PC-9 (cell line): ENCODE measurements at regions of chr7 and their contacts with region 1.

Region 1: GRCh38 chr7:831596-832166 is 595 bp upstream of the SUN1 start:
- DNase-seq: peak; percentile 58 to 93
- H3K4me3 ChIP-seq: peak overlapping the region; percentile 46; the same call in 1 of the 2 replicates
- H3K27ac ChIP-seq: peak overlapping the region; percentile 97
- H3K4me1 ChIP-seq: peaks cover 57% of the 10 kb centered on the region
- H3K27me3 ChIP-seq: no peaks in the 10 kb centered on the region
- CTCF ChIP-seq: no peak

Region 2: GRCh38 chr7:537911-538634 is 293.6 kb before region 1 on chr7:
- CTCF ChIA-PET with region 1: no interaction called
- POLR2A ChIA-PET with region 1: no interaction called
- intact Hi-C with region 1: loop called (anchors 5 kb)
- DNase-seq: peak; percentile 89 to 98
- H3K4me3 ChIP-seq: peak overlapping the region; percentile 60
- H3K27ac ChIP-seq: peak overlapping the region; percentile 99
- H3K4me1 ChIP-seq: peaks cover 52% of the 10 kb centered on the region
- H3K27me3 ChIP-seq: no peaks in the 10 kb centered on the region
- CTCF ChIP-seq: no peak

Region 3: GRCh38 chr7:786472-787255 is 45.0 kb before region 1 on chr7:
- CTCF ChIA-PET with region 1: no interaction called
- POLR2A ChIA-PET with region 1: no interaction called
- intact Hi-C with region 1: loop called (anchors 1 kb)
- DNase-seq: peak; percentile 54 to 81
- H3K4me3 ChIP-seq: no peak overlapping the region
- H3K27ac ChIP-seq: no peak overlapping the region
- H3K4me1 ChIP-seq: no peaks in the 10 kb centered on the region
- H3K27me3 ChIP-seq: no peaks in the 10 kb centered on the region
- CTCF ChIP-seq: peak; percentile 98

Region 4: DNA sequence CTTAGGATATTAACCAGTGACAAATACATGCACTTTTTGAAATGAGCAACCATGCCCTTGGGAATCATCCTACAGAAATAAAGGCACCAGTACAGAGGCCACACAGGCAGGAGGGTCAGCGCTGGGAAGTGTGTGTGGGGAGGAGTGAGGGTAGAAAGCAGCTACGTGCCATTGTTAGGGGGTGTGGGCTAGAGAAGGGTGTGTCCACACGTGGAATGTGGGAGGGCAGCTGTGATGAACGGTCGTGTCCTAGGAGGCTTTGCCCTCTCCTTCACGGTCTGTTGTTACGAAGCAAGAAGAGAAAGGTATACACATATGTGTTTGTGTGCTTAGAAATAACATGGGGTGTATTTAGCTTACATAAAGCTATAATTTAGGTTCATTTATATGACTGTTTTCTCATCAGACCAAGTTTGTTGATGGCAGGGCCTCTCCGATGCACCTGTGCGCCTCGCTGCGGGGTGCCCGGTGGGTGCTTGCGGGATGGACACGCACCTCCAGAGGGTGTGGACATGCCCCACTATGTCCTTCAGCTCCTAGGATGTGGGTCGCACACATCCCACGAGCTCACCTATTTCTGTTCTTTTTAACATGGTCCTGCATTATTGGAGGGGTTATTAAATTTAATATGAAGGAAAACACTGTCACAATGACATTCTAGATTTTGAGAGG is 27.8 kb after region 1 on chr7:
- CTCF ChIA-PET with region 1: no interaction called
- POLR2A ChIA-PET with region 1: no interaction called
- intact Hi-C with region 1: no loop called
- DNase-seq: no peak
- H3K4me3 ChIP-seq: no peak overlapping the region
- H3K27ac ChIP-seq: no peak overlapping the region
- H3K4me1 ChIP-seq: no peaks in the 10 kb centered on the region
- H3K27me3 ChIP-seq: no peaks in the 10 kb centered on the region
- CTCF ChIP-seq: no peak

Region 5: GRCh38 chr7:913736-914516 is 82.2 kb after region 1 on chr7:
- CTCF ChIA-PET with region 1: no interaction called
- POLR2A ChIA-PET with region 1: interaction called, 11 read pairs
- intact Hi-C with region 1: no loop called
- DNase-seq: peak; percentile 65 to 98
- H3K4me3 ChIP-seq: no peak overlapping the region
- H3K27ac ChIP-seq: no peak overlapping the region
- H3K4me1 ChIP-seq: peaks cover 12% of the 10 kb centered on the region
- H3K27me3 ChIP-seq: no peaks in the 10 kb centered on the region
- CTCF ChIP-seq: no peak; the same call in 1 of the 2 replicates

Region 6: DNA sequence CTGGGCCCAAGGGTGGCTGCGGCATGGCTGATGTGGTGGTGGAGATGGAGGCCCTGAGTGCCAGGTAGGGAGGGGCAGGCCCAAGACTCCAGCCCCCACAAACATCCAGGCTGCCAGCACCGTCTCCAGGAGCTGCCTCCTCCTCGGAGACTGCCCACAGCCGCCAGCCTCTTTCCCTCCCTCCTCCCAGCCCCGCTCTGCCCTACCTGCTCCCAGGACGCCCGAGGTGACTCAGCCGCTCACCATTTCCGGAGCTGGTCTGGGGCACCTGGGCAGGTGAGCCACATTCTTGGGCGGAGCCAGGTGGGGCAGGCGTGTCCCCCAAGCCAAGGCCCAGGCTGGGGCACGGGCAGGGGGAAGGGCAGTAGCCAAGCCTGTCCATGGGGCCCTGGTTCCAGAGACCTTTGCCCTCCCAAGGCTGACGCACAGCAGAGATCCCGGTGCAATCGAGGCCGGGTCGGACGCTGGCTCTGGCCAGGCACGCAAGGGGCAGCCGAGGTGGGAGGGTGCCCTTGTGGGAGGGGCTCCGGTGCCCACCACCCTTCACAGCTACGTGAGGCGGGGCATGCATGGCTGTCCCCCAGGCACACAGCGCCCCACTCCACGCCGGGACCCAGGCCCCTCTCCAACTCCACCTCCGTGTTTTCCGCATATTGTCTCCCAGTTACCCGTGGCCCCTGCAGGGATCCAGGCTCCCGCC is 114.0 kb after region 1 on chr7:
- CTCF ChIA-PET with region 1: no interaction called
- POLR2A ChIA-PET with region 1: interaction called, 3 read pairs
- intact Hi-C with region 1: loop called (anchors 1 kb)
- DNase-seq: peak; percentile 99 to 100
- H3K4me3 ChIP-seq: peak overlapping the region; percentile 48; the same call in 1 of the 2 replicates
- H3K27ac ChIP-seq: peak overlapping the region; percentile 94
- H3K4me1 ChIP-seq: peaks cover 61% of the 10 kb centered on the region
- H3K27me3 ChIP-seq: no peaks in the 10 kb centered on the region
- CTCF ChIP-seq: no peak

Region 7: DNA sequence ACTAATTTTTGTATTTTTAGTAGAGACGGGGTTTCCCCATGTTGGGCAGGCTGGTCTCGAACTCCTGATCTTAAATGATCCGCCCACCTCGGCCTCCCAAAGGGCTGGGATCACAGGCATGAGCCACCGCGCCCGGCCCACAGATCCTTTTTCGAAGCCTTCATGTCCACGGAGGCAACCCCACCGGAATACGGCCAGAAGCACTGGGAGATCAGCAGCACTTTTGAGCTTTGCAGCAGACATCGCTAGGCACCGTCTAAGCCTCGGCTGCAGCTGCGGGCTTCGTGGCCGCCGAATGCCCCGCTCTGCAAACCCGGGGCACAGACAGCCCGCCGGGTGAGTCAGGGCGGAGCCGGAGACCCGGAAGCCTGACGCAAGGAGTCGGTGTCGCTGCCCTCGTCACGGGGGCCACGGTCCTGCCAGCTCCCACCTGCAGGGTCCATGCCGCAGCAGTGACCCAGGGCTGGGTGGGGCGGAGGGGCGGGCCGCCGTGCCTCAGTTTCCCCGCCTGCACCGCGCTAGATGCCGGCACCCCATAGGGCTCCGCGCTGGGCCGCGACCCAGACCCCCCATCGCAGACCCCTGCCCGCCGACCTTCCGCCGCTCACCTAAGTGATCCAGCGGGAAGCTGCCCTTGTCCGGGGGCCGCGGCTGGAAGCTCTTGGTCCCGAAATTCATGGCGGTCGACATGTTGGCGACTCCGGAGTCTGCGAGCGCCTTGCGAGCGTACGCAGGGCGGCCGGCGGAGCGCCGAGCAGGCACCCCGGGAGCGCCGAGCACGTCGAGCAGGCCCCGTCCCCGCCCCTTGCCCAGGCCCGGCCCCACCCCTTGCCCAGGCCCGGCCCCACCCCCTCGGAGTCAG is 143.4 kb after region 1 on chr7 and contains the start of gene COX19:
- CTCF ChIA-PET with region 1: no interaction called
- POLR2A ChIA-PET with region 1: interaction called, 11 read pairs
- intact Hi-C with region 1: no loop called
- DNase-seq: peak; percentile 70 to 93
- H3K4me3 ChIP-seq: peak within 1 kb of the TSS; percentile 84
- H3K27ac ChIP-seq: peak within 1 kb of the TSS; percentile 79
- H3K4me1 ChIP-seq: peaks cover 18% of the 10 kb centered on the region; the same call in 1 of the 2 replicates
- H3K27me3 ChIP-seq: no peaks in the 10 kb centered on the region
- CTCF ChIP-seq: no peak
- total RNA-seq, gene COX19: 28.9 and 29.3 TPM in 2 replicates

Region 8: DNA sequence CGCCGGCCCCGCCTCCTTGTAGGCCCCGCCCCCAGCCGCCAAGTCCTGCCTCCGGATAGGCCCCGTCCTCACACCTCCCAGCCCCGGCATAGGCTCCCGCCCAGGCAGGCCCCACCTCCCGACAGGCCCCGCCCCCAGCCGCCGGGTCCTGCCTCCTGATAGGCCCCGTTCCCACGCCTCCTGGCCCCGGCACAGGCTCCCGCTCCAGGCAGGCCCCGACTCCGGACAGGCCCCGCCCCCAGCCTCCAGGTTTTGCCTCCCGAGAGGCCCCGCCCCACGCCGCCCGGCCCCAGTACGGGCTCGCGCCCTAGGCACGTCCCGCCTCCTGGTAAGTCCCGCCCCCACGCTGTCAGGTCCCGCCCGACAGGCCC is 627.8 kb after region 1 on chr7:
- CTCF ChIA-PET with region 1: no interaction called
- POLR2A ChIA-PET with region 1: interaction called, 3 read pairs
- intact Hi-C with region 1: loop called (anchors 10 kb)
- DNase-seq: peak; percentile 92 to 100
- H3K4me3 ChIP-seq: peak overlapping the region; percentile 97; the same call in 1 of the 2 replicates
- H3K27ac ChIP-seq: no peak overlapping the region
- H3K4me1 ChIP-seq: peaks cover 39% of the 10 kb centered on the region
- H3K27me3 ChIP-seq: no peaks in the 10 kb centered on the region
- CTCF ChIP-seq: no peak